ENCODE measurements at regions of chr22 and their contacts with region 1.

Region 1: GRCh38 chr22:42994881-42995562 is 19.9 kb downstream of the PACSIN2 start:
- DNase-seq: peak; percentile 66
- H3K4me3 ChIP-seq: no peak overlapping the region
- H3K27ac ChIP-seq: no peak overlapping the region
- H3K4me1 ChIP-seq: peaks cover 35% of the 10 kb centered on the region
- H3K27me3 ChIP-seq: no peaks in the 10 kb centered on the region
- CTCF ChIP-seq: no peak
- POLR2A ChIP-seq: no peak

Region 2: DNA sequence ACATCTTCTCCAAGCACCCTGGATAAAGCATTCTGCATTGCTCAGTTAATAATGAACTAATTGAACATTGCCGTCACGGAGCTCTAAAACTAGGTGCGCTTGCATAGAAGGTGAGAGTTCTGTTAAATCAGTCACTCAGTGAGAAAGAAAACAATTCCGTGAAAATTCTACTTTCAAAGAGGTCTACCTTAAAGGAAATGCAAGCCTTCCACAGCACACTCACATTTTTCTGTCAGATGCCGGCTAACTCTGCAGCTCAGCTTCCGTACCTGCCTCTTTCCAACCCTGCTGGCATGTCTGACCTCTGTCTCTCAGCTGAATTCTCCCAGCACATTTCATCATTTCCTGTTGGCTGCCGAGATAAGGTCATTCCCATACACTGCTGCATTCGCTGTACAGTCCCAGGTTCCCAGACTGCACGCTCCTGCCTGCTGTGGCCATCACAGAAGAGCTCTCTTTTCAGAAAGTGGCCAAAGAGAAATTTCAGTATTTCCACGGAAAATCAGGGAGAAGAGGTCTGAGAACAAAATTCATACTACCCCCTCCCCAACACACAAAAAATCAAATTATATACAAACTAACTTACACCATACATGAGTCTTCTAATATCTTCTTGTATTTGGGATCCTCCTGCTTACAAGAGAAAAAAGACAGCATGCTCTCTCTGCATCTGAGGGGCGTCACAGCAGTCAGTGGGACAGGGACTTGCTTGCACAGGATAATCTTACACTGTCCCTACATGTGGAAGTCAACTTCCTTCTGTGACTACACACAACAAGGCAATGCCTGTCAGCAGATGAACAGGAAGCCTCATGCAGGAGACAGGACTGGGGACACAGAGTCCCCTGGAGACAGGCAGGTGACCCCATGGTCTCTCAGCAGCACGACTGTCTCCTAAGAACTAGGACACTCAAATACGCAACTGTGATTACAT is 35.2 kb before region 1 on chr22:
- CTCF ChIA-PET with region 1: interaction called, 10 read pairs
- POLR2A ChIA-PET with region 1: no interaction called
- dilution Hi-C with region 1: no loop called
- intact Hi-C with region 1: no loop called
- DNase-seq: peak; percentile 98
- H3K4me3 ChIP-seq: peak overlapping the region in 1 of 3 experiments; percentile 8
- H3K27ac ChIP-seq: peak overlapping the region; percentile 87
- H3K4me1 ChIP-seq: peaks cover 35% of the 10 kb centered on the region
- H3K27me3 ChIP-seq: no peaks in the 10 kb centered on the region
- CTCF ChIP-seq: no peak
- POLR2A ChIP-seq: peak; percentile 68

Region 3: GRCh38 chr22:42978453-42979103 is 16.4 kb before region 1 on chr22:
- CTCF ChIA-PET with region 1: interaction called, 18 read pairs
- POLR2A ChIA-PET with region 1: no interaction called
- dilution Hi-C with region 1: no loop called
- intact Hi-C with region 1: no loop called
- DNase-seq: peak; percentile 76
- H3K4me3 ChIP-seq: no peak overlapping the region
- H3K27ac ChIP-seq: peak overlapping the region; percentile 4
- H3K4me1 ChIP-seq: peaks cover 11% of the 10 kb centered on the region
- H3K27me3 ChIP-seq: no peaks in the 10 kb centered on the region
- CTCF ChIP-seq: no peak
- POLR2A ChIP-seq: no peak

Region 4: DNA sequence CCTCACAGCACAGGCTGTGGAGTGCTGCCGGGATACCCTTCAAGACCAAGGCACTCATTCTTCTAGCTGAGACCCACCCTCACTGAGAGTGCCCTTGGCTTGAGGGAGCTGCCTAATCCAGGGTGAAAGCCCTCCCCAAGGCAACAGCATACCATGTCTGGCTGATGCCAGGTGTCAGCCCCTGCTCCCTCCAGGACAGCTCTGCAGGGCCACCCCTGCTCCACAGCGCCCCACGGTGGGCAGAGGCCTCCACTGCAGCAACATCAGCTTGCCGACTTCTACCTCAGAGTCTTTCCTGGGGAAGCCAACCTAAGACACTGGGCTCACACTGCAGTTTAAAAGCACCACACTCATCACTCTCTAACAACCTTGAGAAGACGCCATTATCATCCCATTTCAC is 65.2 kb after region 1 on chr22:
- CTCF ChIA-PET with region 1: interaction called, 10 read pairs
- POLR2A ChIA-PET with region 1: no interaction called
- dilution Hi-C with region 1: no loop called
- intact Hi-C with region 1: no loop called
- DNase-seq: peak; percentile 35
- H3K4me3 ChIP-seq: no peak overlapping the region
- H3K27ac ChIP-seq: no peak overlapping the region
- H3K4me1 ChIP-seq: no peaks in the 10 kb centered on the region
- H3K27me3 ChIP-seq: no peaks in the 10 kb centered on the region
- CTCF ChIP-seq: peak; percentile 69 to 79
- POLR2A ChIP-seq: no peak

Region 5: GRCh38 chr22:43100211-43100610 is 105.2 kb after region 1 on chr22:
- CTCF ChIA-PET with region 1: no interaction called
- POLR2A ChIA-PET with region 1: no interaction called
- dilution Hi-C with region 1: no loop called
- intact Hi-C with region 1: no loop called
- DNase-seq: no peak
- H3K4me3 ChIP-seq: no peak overlapping the region
- H3K27ac ChIP-seq: no peak overlapping the region
- H3K4me1 ChIP-seq: peaks cover 3% of the 10 kb centered on the region
- H3K27me3 ChIP-seq: no peaks in the 10 kb centered on the region
- CTCF ChIP-seq: no peak
- POLR2A ChIP-seq: no peak

Region 6: GRCh38 chr22:43110444-43110926 is 115.5 kb after region 1 on chr22 and contains the start of gene BIK:
- CTCF ChIA-PET with region 1: no interaction called
- POLR2A ChIA-PET with region 1: no interaction called
- dilution Hi-C with region 1: no loop called
- intact Hi-C with region 1: no loop called
- DNase-seq: peak; percentile 47
- H3K4me3 ChIP-seq: peak within 1 kb of the TSS; percentile 19 to 51 (median 50)
- H3K27ac ChIP-seq: no peak within 1 kb of the TSS
- H3K4me1 ChIP-seq: no peaks in the 10 kb centered on the region
- H3K27me3 ChIP-seq: peaks cover 16 to 26% of the 10 kb centered on the region in 2 experiments
- CTCF ChIP-seq: peak; percentile 19 to 53
- POLR2A ChIP-seq: no peak
- total RNA-seq, gene BIK: 0.49 TPM in 1 of 2 replicates, not detected in the other

Region 7: GRCh38 chr22:43772831-43773230 is 777.8 kb after region 1 on chr22:
- CTCF ChIA-PET with region 1: no interaction called
- POLR2A ChIA-PET with region 1: no interaction called
- dilution Hi-C with region 1: no loop called
- intact Hi-C with region 1: no loop called
- DNase-seq: no peak
- H3K4me3 ChIP-seq: no peak overlapping the region
- H3K27ac ChIP-seq: no peak overlapping the region
- H3K4me1 ChIP-seq: no peaks in the 10 kb centered on the region
- H3K27me3 ChIP-seq: no peaks in the 10 kb centered on the region
- CTCF ChIP-seq: no peak
- POLR2A ChIP-seq: no peak

Measured in endothelial cell of umbilical vein (primary cell).